CD4-positive, alpha-beta T cell (primary cell): ENCODE measurements at regions of chr9 and their contacts with region 1.

Region 1: DNA sequence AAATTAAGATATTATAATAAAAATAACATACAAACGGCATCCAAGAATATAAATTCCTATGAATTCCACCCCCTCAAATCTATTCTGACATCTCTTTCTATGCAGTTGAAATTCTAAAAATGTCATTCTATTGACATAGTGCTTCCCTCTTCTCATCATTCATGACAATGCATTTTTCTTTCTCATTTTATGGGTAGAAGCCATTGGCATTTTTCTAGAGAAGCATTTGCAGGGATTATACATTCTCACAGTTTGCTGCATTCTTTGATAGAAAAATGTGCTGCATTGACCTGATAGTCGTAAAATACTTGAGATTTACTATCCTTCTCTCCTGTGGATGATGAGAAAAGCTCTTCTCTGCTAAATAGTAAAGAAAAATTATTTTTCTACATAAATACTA is 760.9 kb upstream of the ACO1 start:
- DNase-seq: no peak
- ATAC-seq: no peak
- H3K4me3 ChIP-seq: no peak overlapping the region
- H3K4me3 Mint-ChIP-seq: no peak overlapping the region
- H3K27ac ChIP-seq: no peak overlapping the region
- H3K27ac Mint-ChIP-seq: no peak overlapping the region
- H3K4me1 ChIP-seq: no peaks in the 10 kb centered on the region
- H3K4me1 Mint-ChIP-seq: peaks cover 4% of the 10 kb centered on the region
- H3K27me3 ChIP-seq: no peaks in the 10 kb centered on the region
- H3K27me3 Mint-ChIP-seq: no peaks in the 10 kb centered on the region
- CTCF ChIP-seq: no peak

Region 2: DNA sequence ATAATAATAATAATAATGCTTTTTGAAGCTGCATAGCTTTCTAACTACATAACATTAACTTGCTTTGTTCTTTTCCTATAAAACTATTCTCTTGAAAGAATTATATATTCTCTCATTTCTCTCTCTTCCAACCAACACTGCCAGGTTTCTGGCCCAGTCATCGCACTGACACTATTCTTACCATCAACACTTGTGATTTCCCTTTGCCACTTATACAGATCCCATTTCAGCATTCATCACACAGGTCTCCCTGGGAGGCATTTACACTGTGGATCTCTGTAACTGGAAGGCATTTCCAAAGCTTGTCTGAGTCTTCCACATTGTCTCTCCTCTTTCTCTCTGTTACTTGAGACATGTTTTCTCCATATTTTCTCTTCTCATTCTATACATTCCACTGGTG is 16.8 kb before region 1 on chr9:
- CTCF ChIA-PET with region 1: no interaction called
- POLR2A ChIA-PET with region 1: interaction called, 3 read pairs
- intact Hi-C with region 1: loop called in 1 of 2 experiments (anchors 1 kb)
- DNase-seq: no peak
- ATAC-seq: no peak
- H3K4me3 ChIP-seq: no peak overlapping the region
- H3K4me3 Mint-ChIP-seq: no peak overlapping the region
- H3K27ac ChIP-seq: no peak overlapping the region
- H3K27ac Mint-ChIP-seq: no peak overlapping the region
- H3K4me1 ChIP-seq: no peaks in the 10 kb centered on the region
- H3K4me1 Mint-ChIP-seq: no peaks in the 10 kb centered on the region
- H3K27me3 ChIP-seq: no peaks in the 10 kb centered on the region
- H3K27me3 Mint-ChIP-seq: no peaks in the 10 kb centered on the region
- CTCF ChIP-seq: no peak

Region 3: GRCh38 chr9:31671011-31671410 is 47.5 kb after region 1 on chr9:
- CTCF ChIA-PET with region 1: no interaction called
- POLR2A ChIA-PET with region 1: no interaction called
- intact Hi-C with region 1: no loop called
- DNase-seq: no peak
- ATAC-seq: no peak
- H3K4me3 ChIP-seq: no peak overlapping the region
- H3K4me3 Mint-ChIP-seq: no peak overlapping the region
- H3K27ac ChIP-seq: no peak overlapping the region
- H3K27ac Mint-ChIP-seq: no peak overlapping the region
- H3K4me1 ChIP-seq: no peaks in the 10 kb centered on the region
- H3K4me1 Mint-ChIP-seq: no peaks in the 10 kb centered on the region
- H3K27me3 ChIP-seq: no peaks in the 10 kb centered on the region
- H3K27me3 Mint-ChIP-seq: no peaks in the 10 kb centered on the region
- CTCF ChIP-seq: no peak